ENCODE measurements at regions of chr7 and their contacts with region 1.

Region 1: DNA sequence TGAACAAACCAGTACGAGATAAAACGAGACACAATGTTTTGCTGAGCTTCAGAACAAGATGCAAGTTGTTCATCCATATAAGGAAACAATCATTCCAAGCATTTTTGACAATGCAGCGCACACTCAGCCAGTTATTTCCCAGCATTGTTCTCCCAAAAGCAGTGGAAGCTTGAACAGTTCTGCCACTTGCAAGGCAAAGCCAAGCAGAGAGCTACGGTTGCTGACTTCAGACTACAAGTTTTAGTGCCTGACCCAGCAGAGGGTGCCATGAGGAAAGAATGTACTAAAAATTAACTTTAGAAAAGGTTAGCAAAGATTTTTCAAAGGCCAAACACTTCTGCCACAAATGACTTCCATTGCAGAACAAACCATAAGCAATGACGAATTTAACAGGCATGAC is 152.5 kb downstream of the SLC25A13 start:
- DNase-seq: no peak
- H3K4me3 ChIP-seq: no peak overlapping the region
- H3K27ac ChIP-seq: peak overlapping the region; percentile 20 to 32
- H3K4me1 ChIP-seq: peaks cover 0 to 2% of the 10 kb centered on the region in 2 donors
- H3K27me3 ChIP-seq: no peaks in the 10 kb centered on the region
- CTCF ChIP-seq: no peak

Region 2: DNA sequence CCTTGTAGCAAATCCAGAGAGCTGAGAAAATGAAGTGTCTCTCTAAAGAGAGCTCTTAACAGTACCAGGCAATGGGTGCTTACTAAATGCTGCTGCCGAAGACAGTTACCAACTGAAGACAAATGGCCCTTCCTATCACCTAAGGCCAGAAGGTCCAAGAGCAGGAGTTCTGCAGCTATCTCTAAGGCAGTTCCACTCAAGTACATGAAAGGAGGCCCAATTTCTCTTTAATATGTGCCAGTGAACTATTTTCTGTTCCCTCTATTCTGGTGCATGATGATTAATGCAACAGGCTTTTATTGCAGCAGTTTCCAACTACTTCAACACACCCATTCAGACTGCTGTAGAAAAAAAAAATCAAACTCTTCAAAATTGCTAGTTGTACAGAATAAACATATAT is 30.0 kb after region 1 on chr7:
- intact Hi-C with region 1: no loop called
- DNase-seq: no peak
- H3K4me3 ChIP-seq: no peak overlapping the region
- H3K27ac ChIP-seq: peak overlapping the region; percentile 10 to 15
- H3K4me1 ChIP-seq: peaks cover 0 to 12% of the 10 kb centered on the region in 2 donors
- H3K27me3 ChIP-seq: no peaks in the 10 kb centered on the region
- CTCF ChIP-seq: no peak

Region 3: DNA sequence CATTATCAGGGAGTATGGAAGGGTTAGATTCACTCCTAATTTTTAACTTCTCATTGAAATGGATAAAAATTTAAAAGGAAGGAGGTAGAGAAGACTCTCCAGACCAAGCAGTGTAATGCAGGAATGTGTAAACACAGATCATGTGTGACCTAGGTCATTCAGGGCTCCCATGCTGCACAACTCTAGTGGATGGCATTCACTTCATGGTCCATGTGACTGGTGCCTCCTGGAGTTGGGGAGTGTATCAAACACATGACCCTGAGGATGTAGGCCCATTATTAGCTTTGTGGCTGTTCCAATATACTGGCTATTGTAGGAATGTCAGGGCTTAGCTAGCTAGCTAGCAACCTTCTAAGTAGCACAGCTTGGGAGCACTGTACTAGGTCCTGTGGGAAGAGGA is 42.5 kb after region 1 on chr7:
- intact Hi-C with region 1: loop called (anchors 2 kb)
- DNase-seq: no peak
- H3K4me3 ChIP-seq: no peak overlapping the region
- H3K27ac ChIP-seq: no peak overlapping the region
- H3K4me1 ChIP-seq: no peaks in the 10 kb centered on the region
- H3K27me3 ChIP-seq: no peaks in the 10 kb centered on the region
- CTCF ChIP-seq: no peak

Region 4: GRCh38 chr7:96321658-96322372 is 152.4 kb after region 1 on chr7 and contains the start of gene SLC25A13:
- intact Hi-C with region 1: no loop called
- DNase-seq: peak; percentile 80 to 94
- H3K4me3 ChIP-seq: peak within 1 kb of the TSS; percentile 68 to 85
- H3K27ac ChIP-seq: peak within 1 kb of the TSS; percentile 93
- H3K4me1 ChIP-seq: peaks cover 6 to 16% of the 10 kb centered on the region in 2 donors
- H3K27me3 ChIP-seq: no peaks in the 10 kb centered on the region
- CTCF ChIP-seq: no peak
- total RNA-seq, gene SLC25A13: 5.6 TPM